Caco-2 (cell line): ENCODE measurements at regions of chr1 and their contacts with region 1.

Region 1: DNA sequence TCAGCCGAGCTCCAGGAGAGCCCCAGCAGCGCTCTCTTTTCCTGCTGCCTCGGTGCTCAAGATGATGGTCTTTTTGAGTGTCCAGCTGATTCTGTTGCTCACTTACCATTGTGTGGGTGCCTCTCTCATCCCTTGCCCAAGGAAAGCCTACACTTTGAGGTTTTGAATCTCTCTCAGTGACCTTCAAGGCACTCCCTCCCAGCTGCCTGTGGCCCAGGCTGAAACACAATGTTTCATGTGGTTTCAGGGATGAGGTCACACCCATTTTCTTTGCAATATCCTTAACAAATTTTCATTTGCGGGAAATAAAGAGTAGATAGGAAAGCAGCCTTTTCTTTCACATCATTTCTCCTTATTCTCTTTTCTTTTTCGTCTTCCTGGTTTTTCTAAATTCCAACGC is 12.6 kb upstream of the MRPS14 start:
- DNase-seq: no peak
- H3K4me3 ChIP-seq: no peak overlapping the region
- H3K4me3 Mint-ChIP-seq: no peak overlapping the region
- H3K27ac Mint-ChIP-seq: no peak overlapping the region
- H3K4me1 ChIP-seq: no peaks in the 10 kb centered on the region
- H3K4me1 Mint-ChIP-seq: peaks cover 13% of the 10 kb centered on the region
- H3K27me3 ChIP-seq: no peaks in the 10 kb centered on the region
- H3K27me3 Mint-ChIP-seq: no peaks in the 10 kb centered on the region
- CTCF ChIP-seq: no peak

Region 2: DNA sequence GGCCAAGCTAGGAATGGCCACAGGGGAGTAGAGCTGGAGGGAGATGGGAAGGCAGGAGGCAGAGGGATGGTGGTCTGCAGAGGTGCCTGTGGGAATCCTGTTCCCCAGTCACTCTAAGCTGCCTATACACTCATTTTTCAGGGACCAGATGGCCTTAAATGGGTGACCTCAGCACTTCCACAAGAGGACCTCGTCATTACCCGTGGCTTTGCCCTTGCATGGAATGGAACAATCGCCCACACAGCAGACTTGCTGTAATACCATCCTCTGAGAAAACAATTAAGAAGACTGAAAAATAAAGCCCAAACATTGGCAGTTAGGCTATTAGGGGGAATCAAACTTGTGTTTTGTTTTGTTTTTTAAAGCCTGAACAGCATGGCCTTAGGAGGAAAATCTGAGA is 18.9 kb after region 1 on chr1:
- CTCF ChIA-PET with region 1: no interaction called
- POLR2A ChIA-PET with region 1: no interaction called
- intact Hi-C with region 1: no loop called
- DNase-seq: no peak
- H3K4me3 ChIP-seq: no peak overlapping the region
- H3K4me3 Mint-ChIP-seq: no peak overlapping the region
- H3K27ac Mint-ChIP-seq: no peak overlapping the region
- H3K4me1 ChIP-seq: no peaks in the 10 kb centered on the region
- H3K4me1 Mint-ChIP-seq: no peaks in the 10 kb centered on the region
- H3K27me3 ChIP-seq: no peaks in the 10 kb centered on the region
- H3K27me3 Mint-ChIP-seq: peaks cover 13% of the 10 kb centered on the region
- CTCF ChIP-seq: no peak

Region 3: GRCh38 chr1:175072099-175072951 is 36.5 kb after region 1 on chr1:
- CTCF ChIA-PET with region 1: no interaction called
- POLR2A ChIA-PET with region 1: no interaction called
- intact Hi-C with region 1: loop called (anchors 5 kb)
- DNase-seq: no peak
- H3K4me3 ChIP-seq: no peak overlapping the region
- H3K4me3 Mint-ChIP-seq: no peak overlapping the region
- H3K27ac Mint-ChIP-seq: no peak overlapping the region
- H3K4me1 ChIP-seq: no peaks in the 10 kb centered on the region
- H3K4me1 Mint-ChIP-seq: no peaks in the 10 kb centered on the region
- H3K27me3 ChIP-seq: no peaks in the 10 kb centered on the region; the same call in none of the 2 replicates
- H3K27me3 Mint-ChIP-seq: peaks cover 5% of the 10 kb centered on the region
- CTCF ChIP-seq: no peak